Caco-2 (cell line): ENCODE measurements at regions of chr11 and their contacts with region 1.

Region 1: GRCh38 chr11:111982019-111982464 is 43.2 kb upstream of the DLAT start:
- DNase-seq: peak; percentile 88 to 91
- H3K4me3 ChIP-seq: no peak overlapping the region
- H3K4me3 Mint-ChIP-seq: peak overlapping the region; percentile 53
- H3K27ac Mint-ChIP-seq: peak overlapping the region; percentile 52
- H3K4me1 ChIP-seq: peaks cover 29% of the 10 kb centered on the region
- H3K4me1 Mint-ChIP-seq: peaks cover 30% of the 10 kb centered on the region
- H3K27me3 ChIP-seq: no peaks in the 10 kb centered on the region
- H3K27me3 Mint-ChIP-seq: no peaks in the 10 kb centered on the region
- CTCF ChIP-seq: peak; percentile 95 to 99

Region 2: DNA sequence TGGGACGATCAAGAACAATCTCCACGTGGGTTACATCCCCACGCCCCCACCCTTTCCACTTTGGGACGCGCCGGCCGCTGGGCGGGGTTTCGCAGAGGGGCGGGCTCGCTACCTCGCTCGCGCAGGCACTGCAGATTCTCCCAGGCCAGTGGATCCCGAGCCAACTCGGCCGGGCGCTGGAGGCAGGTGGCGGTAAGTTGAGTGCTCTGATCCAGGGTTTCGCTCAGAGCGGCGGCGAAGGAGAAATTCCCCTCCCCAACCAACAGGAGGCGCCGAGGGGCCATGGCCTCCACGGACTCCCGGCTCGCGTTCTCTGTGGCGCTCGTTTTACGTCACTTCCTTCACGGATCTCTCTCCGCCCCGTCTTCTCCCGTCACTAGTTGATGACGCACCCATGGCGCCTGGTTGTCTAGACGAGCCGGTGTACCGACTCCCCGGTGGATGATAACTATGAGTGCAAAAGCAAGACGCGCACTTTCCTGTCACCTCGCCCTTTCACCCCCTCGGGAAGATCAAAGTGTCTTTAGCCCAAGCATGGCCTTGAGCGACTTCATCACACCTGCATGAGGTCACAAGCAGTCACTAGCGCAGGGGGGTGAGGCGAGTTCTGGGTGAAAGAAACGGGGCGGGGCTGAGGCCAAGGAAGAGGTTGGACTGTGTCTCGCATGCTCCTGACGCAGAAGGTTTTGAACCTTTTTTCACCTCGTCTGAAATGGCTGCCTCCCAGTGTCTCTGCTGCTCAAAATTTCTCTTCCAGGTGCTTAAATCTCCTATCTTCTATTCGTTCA is 103.0 kb before region 1 on chr11 and contains the starts of genes CFAP68 and FDXACB1:
- CTCF ChIA-PET with region 1: interaction called, 27 read pairs
- POLR2A ChIA-PET with region 1: no interaction called
- intact Hi-C with region 1: loop called (anchors 1 kb)
- DNase-seq: peak; percentile 100
- H3K4me3 ChIP-seq: peak within 1 kb of the TSS; percentile 51
- H3K4me3 Mint-ChIP-seq: peak within 1 kb of the TSS; percentile 86
- H3K27ac Mint-ChIP-seq: peak within 1 kb of the TSS; percentile 97
- H3K4me1 ChIP-seq: peaks cover 6% of the 10 kb centered on the region; the same call in 1 of the 2 replicates
- H3K4me1 Mint-ChIP-seq: peaks cover 8% of the 10 kb centered on the region
- H3K27me3 ChIP-seq: no peaks in the 10 kb centered on the region
- H3K27me3 Mint-ChIP-seq: no peaks in the 10 kb centered on the region
- CTCF ChIP-seq: peak; percentile 99
- total RNA-seq, gene CFAP68: 69.8 and 71.4 TPM in 2 replicates
- total RNA-seq, gene FDXACB1: 4.3 and 4.7 TPM in 2 replicates

Region 3: GRCh38 chr11:111926505-111927391 is 55.3 kb before region 1 on chr11:
- CTCF ChIA-PET with region 1: interaction called, 102 read pairs
- POLR2A ChIA-PET with region 1: interaction called, 4 read pairs
- intact Hi-C with region 1: loop called (anchors 1 kb)
- DNase-seq: peak; percentile 99 to 100
- H3K4me3 ChIP-seq: peak overlapping the region; percentile 30
- H3K4me3 Mint-ChIP-seq: peak overlapping the region; percentile 78
- H3K27ac Mint-ChIP-seq: peak overlapping the region; percentile 96
- H3K4me1 ChIP-seq: peaks cover 21% of the 10 kb centered on the region
- H3K4me1 Mint-ChIP-seq: peaks cover 39% of the 10 kb centered on the region
- H3K27me3 ChIP-seq: no peaks in the 10 kb centered on the region
- H3K27me3 Mint-ChIP-seq: no peaks in the 10 kb centered on the region
- CTCF ChIP-seq: no peak

Region 4: GRCh38 chr11:111938687-111939160 is 43.3 kb before region 1 on chr11:
- CTCF ChIA-PET with region 1: interaction called, 66 read pairs
- POLR2A ChIA-PET with region 1: no interaction called
- intact Hi-C with region 1: loop called (anchors 1 kb)
- DNase-seq: no peak
- H3K4me3 ChIP-seq: no peak overlapping the region
- H3K4me3 Mint-ChIP-seq: peak overlapping the region; percentile 77
- H3K27ac Mint-ChIP-seq: no peak overlapping the region
- H3K4me1 ChIP-seq: peaks cover 18% of the 10 kb centered on the region
- H3K4me1 Mint-ChIP-seq: peaks cover 15% of the 10 kb centered on the region
- H3K27me3 ChIP-seq: no peaks in the 10 kb centered on the region
- H3K27me3 Mint-ChIP-seq: no peaks in the 10 kb centered on the region
- CTCF ChIP-seq: no peak

Region 5: GRCh38 chr11:111954154-111954553 is 27.9 kb before region 1 on chr11:
- CTCF ChIA-PET with region 1: interaction called, 12 read pairs
- POLR2A ChIA-PET with region 1: no interaction called
- intact Hi-C with region 1: no loop called
- DNase-seq: no peak
- H3K4me3 ChIP-seq: no peak overlapping the region
- H3K4me3 Mint-ChIP-seq: no peak overlapping the region
- H3K27ac Mint-ChIP-seq: no peak overlapping the region
- H3K4me1 ChIP-seq: no peaks in the 10 kb centered on the region
- H3K4me1 Mint-ChIP-seq: no peaks in the 10 kb centered on the region
- H3K27me3 ChIP-seq: no peaks in the 10 kb centered on the region
- H3K27me3 Mint-ChIP-seq: no peaks in the 10 kb centered on the region
- CTCF ChIP-seq: no peak

Region 6: GRCh38 chr11:112024773-112025678 is 43.0 kb after region 1 on chr11 and contains the start of gene DLAT:
- CTCF ChIA-PET with region 1: interaction called, 29 read pairs
- POLR2A ChIA-PET with region 1: interaction called, 5 read pairs
- intact Hi-C with region 1: loop called (anchors 1 kb)
- DNase-seq: peak; percentile 97 to 99
- H3K4me3 ChIP-seq: peak within 1 kb of the TSS; percentile 79
- H3K4me3 Mint-ChIP-seq: peak within 1 kb of the TSS; percentile 94
- H3K27ac Mint-ChIP-seq: peak within 1 kb of the TSS; percentile 98
- H3K4me1 ChIP-seq: no peaks in the 10 kb centered on the region; the same call in 1 of the 2 replicates
- H3K4me1 Mint-ChIP-seq: peaks cover 17% of the 10 kb centered on the region
- H3K27me3 ChIP-seq: no peaks in the 10 kb centered on the region
- H3K27me3 Mint-ChIP-seq: no peaks in the 10 kb centered on the region
- CTCF ChIP-seq: no peak
- total RNA-seq, gene DLAT: 99.3 and 100.0 TPM in 2 replicates